Caco-2 (cell line): ENCODE measurements at regions of chr11 and their contacts with region 1.

Region 1: GRCh38 chr11:133078591-133079404 is 453.5 kb downstream of the OPCML start:
- DNase-seq: peak; percentile 60 to 75
- H3K4me3 ChIP-seq: no peak overlapping the region
- H3K4me3 Mint-ChIP-seq: no peak overlapping the region
- H3K27ac Mint-ChIP-seq: no peak overlapping the region
- H3K4me1 ChIP-seq: no peaks in the 10 kb centered on the region
- H3K4me1 Mint-ChIP-seq: no peaks in the 10 kb centered on the region
- H3K27me3 ChIP-seq: no peaks in the 10 kb centered on the region; the same call in 1 of the 2 replicates
- H3K27me3 Mint-ChIP-seq: peaks cover 13% of the 10 kb centered on the region
- CTCF ChIP-seq: peak; percentile 91 to 96

Region 2: DNA sequence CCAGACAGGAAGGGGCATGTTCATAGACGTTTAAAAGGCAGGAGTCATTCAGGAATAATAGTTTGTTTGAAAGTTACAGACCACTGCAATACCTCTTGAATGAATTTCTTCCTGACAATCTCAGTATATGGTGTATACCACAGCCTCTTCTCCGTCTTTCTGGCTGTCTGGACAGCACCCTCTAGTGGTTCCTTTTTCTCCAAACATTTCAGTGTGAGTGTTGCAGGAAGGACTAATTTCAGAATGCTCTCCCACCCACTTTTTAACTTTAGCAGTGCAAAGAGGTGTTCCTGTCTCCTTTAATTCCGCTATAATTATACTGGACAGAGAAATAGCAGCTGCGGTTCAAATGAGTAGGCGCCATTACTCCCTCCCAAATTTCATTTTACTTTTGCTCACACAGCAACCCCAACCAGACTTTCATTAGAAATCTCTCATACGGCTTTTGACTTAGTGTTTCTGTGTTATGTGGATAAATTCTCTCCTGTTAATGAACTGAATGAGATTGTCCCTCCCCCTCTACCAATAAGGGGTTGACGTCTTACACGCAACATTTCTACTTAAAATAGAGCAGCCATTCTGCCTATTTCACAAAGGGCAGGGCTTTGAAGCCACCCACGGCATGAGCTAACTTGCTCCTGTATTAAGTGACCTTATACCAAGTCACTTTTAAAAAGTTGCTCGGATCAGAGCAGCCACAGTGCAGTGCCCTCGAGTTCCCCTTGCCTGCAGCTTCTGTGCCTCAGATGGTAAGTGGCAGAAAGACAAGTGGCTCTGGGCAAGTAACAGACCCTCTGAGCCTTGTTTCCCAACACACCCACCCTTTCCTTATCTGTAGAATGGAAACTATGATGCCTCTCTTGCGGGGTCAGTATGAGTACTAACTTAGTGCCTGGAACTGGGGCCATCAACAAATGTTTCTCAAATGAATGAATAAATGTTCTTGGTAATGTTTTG is 84.9 kb after region 1 on chr11:
- CTCF ChIA-PET with region 1: interaction called, 10 read pairs
- POLR2A ChIA-PET with region 1: no interaction called
- intact Hi-C with region 1: loop called (anchors 1 kb)
- DNase-seq: peak in 1 of 2 experiments; percentile 69
- H3K4me3 ChIP-seq: no peak overlapping the region
- H3K4me3 Mint-ChIP-seq: no peak overlapping the region
- H3K27ac Mint-ChIP-seq: no peak overlapping the region
- H3K4me1 ChIP-seq: no peaks in the 10 kb centered on the region
- H3K4me1 Mint-ChIP-seq: peaks cover 12% of the 10 kb centered on the region
- H3K27me3 ChIP-seq: no peaks in the 10 kb centered on the region
- H3K27me3 Mint-ChIP-seq: peaks cover 9% of the 10 kb centered on the region
- CTCF ChIP-seq: peak; percentile 76 to 93

Region 3: GRCh38 chr11:133619973-133620372 is 541.2 kb after region 1 on chr11:
- CTCF ChIA-PET with region 1: no interaction called
- POLR2A ChIA-PET with region 1: no interaction called
- intact Hi-C with region 1: loop called (anchors 1 kb)
- DNase-seq: peak in 1 of 2 experiments; percentile 16
- H3K4me3 ChIP-seq: no peak overlapping the region
- H3K4me3 Mint-ChIP-seq: no peak overlapping the region
- H3K27ac Mint-ChIP-seq: no peak overlapping the region
- H3K4me1 ChIP-seq: no peaks in the 10 kb centered on the region
- H3K4me1 Mint-ChIP-seq: no peaks in the 10 kb centered on the region
- H3K27me3 ChIP-seq: no peaks in the 10 kb centered on the region
- H3K27me3 Mint-ChIP-seq: no peaks in the 10 kb centered on the region
- CTCF ChIP-seq: peak; percentile 10 to 30

Region 4: DNA sequence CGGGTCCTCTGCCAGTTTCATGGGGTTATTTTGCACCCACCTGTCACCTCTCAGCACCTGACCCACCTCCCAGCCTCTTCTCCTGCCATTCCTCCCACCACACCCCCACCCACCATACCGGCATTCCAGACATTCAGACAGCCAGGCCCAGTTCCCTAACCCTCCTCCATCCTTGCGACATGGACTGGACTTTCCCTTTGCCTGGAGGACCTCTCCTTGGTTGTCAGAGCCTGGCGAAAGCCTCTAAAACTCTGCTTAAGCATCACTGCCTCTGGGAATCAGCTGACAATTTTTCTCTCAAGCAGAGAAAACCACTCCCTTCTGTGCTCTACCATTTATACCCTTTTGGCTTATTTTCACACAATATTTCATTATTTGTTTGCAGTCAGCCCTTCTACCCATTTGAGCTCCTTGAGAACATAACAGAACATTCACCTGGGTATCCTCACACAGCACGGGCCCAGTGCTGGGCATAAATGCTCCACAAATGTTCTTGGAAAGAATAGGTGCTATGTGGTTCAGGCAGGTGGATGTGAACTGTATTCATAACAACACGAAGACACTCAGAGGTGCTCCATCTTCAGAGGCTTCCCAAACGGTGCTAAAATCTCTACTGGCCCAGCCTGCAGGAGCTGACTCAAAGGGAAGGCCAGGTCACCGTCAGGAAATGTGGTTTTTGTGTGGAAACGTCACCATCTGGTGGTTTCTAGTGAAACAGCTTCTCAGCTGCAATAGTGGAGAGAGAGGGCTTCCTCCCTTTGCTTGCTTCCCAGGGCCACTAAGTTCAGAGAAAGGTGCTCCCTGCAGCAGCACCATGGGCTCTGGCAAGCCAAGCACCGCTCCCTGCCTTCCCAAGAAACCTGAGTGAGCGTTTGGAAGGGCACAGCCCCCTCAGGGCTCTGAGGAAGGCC is 756.1 kb after region 1 on chr11:
- CTCF ChIA-PET with region 1: interaction called, 17 read pairs
- POLR2A ChIA-PET with region 1: no interaction called
- intact Hi-C with region 1: loop called (anchors 1 kb)
- DNase-seq: peak; percentile 75 to 76
- H3K4me3 ChIP-seq: no peak overlapping the region
- H3K4me3 Mint-ChIP-seq: no peak overlapping the region
- H3K27ac Mint-ChIP-seq: peak overlapping the region; percentile 27
- H3K4me1 ChIP-seq: no peaks in the 10 kb centered on the region
- H3K4me1 Mint-ChIP-seq: no peaks in the 10 kb centered on the region
- H3K27me3 ChIP-seq: no peaks in the 10 kb centered on the region
- H3K27me3 Mint-ChIP-seq: peaks cover 3% of the 10 kb centered on the region
- CTCF ChIP-seq: peak; percentile 78 to 81